ENCODE measurements at regions of chr13 and their contacts with region 1.

Region 1: GRCh38 chr13:23871616-23872220 is 17.5 kb downstream of the MIPEP start:
- DNase-seq: no peak
- H3K4me3 ChIP-seq: no peak overlapping the region
- H3K27ac ChIP-seq: peak overlapping the region in 1 of 2 donors; percentile 19
- H3K4me1 ChIP-seq: peaks cover 6% of the 10 kb centered on the region
- H3K27me3 ChIP-seq: no peaks in the 10 kb centered on the region
- CTCF ChIP-seq: peak in 3 of 4 experiments; percentile 64 to 85 (median 67)
- POLR2A ChIP-seq: no peak

Region 2: GRCh38 chr13:23020223-23020843 is 851.4 kb before region 1 on chr13:
- intact Hi-C with region 1: no loop called
- DNase-seq: peak; percentile 33
- H3K4me3 ChIP-seq: no peak overlapping the region
- H3K27ac ChIP-seq: no peak overlapping the region
- H3K4me1 ChIP-seq: no peaks in the 10 kb centered on the region
- H3K27me3 ChIP-seq: no peaks in the 10 kb centered on the region
- CTCF ChIP-seq: peak; percentile 72 to 77 (median 74)
- POLR2A ChIP-seq: no peak

Region 3: GRCh38 chr13:23579072-23579895 is 292.4 kb before region 1 on chr13:
- intact Hi-C with region 1: loop called (anchors 2 kb)
- DNase-seq: peak; percentile 93
- H3K4me3 ChIP-seq: peak overlapping the region; percentile 80 to 82
- H3K27ac ChIP-seq: peak overlapping the region; percentile 92 to 95
- H3K4me1 ChIP-seq: no peaks in the 10 kb centered on the region
- H3K27me3 ChIP-seq: no peaks in the 10 kb centered on the region
- CTCF ChIP-seq: peak in 1 of 4 experiments; percentile 1
- POLR2A ChIP-seq: peak; percentile 58

Region 4: DNA sequence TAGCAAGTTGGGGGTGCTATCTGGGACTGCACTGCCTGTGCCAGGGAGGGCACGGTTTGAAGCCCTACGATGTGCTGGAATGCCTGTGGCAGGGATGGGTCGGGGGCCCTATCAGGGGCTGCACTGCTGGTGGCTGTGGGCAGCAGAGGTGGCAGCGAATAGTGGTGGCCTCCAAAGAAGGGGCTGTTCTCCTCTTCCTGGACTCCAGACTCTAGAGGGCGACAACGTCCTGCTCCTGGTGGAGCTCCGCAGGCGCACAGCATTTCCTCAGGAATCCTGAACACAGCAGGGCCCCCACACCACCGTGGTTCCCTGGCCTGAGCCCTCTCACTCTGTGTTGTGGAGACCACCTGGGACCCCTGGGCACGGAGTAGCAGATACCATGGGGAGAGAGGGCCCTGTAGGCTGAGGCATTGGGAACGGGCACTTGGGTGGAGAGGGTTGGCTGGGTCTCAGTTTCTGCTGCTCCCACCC is 155.9 kb before region 1 on chr13:
- intact Hi-C with region 1: loop called (anchors 5 kb)
- DNase-seq: no peak
- H3K4me3 ChIP-seq: peak overlapping the region; percentile 1 to 9
- H3K27ac ChIP-seq: no peak overlapping the region
- H3K4me1 ChIP-seq: no peaks in the 10 kb centered on the region
- H3K27me3 ChIP-seq: no peaks in the 10 kb centered on the region
- CTCF ChIP-seq: peak in 3 of 4 experiments; percentile 15 to 38 (median 24)
- POLR2A ChIP-seq: no peak